ENCODE measurements at regions of chr12 and their contacts with region 1.

Region 1: DNA sequence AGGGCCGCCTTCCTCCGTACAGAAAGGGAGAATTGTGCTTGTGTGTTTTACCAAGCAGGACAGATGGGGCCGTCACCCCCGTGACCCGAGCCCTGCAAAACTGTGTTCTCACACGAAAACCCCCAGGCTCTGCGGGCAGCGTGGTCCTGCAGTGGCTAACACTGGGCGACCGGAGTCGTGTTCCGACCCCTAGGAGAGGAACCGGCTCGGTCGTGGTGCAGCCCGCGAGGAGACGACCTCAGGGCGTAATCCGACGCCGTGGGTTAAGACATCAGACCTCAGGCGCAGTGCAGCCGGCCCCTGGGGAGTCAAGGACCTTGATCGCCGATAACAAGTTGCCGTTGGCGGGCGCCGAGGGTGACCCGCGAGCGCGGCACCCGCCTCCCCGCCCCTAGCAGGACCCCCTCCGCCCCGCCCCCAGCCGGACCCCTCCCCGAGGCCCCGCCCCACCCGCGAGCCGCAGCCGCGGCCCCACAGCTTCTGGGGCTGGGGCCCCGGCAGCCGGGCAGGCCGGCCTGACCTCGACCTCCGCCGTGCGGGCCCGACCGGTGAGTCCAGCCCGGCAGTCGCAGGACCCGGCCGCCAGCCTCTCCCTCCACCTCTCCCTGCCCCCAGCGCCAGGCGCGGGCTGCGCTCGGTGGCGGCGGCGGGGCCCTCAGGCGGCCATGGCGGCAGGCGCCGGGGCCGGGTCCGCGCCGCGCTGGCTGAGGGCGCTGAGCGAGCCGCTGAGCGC is at the start of gene CHPT1:
- DNase-seq: peak; percentile 79 to 92 (median 90)
- ATAC-seq: peak; percentile 73 to 78 (median 76)
- H3K4me3 ChIP-seq: peak within 1 kb of the TSS; percentile 70 to 96 (median 90)
- H3K27ac ChIP-seq: peak within 1 kb of the TSS; percentile 86 to 98 (median 94)
- H3K4me1 ChIP-seq: peaks cover 0 to 47% (median 23%) of the 10 kb centered on the region in 12 donors
- H3K27me3 ChIP-seq: no peaks in the 10 kb centered on the region
- CTCF ChIP-seq: peak in 1 of 12 donors; percentile 4
- POLR2A ChIP-seq: peak; percentile 22 to 57
- total RNA-seq, gene CHPT1: 84.2 to 208 (median 98.9) TPM

Region 2: GRCh38 chr12:101680240-101680639 is 17.1 kb before region 1 on chr12:
- intact Hi-C with region 1: loop called in 2 of 10 experiments (anchors 2 kb)
- DNase-seq: peak in 1 of 5 donors; percentile 31
- ATAC-seq: peak; percentile 84 to 96 (median 90)
- H3K4me3 ChIP-seq: peak overlapping the region in 2 of 12 donors; percentile 14 to 24
- H3K27ac ChIP-seq: peak overlapping the region in 10 of 12 donors; percentile 4 to 81 (median 50)
- H3K4me1 ChIP-seq: peaks cover 0 to 10% (median 3%) of the 10 kb centered on the region in 12 donors
- H3K27me3 ChIP-seq: no peaks in the 10 kb centered on the region
- CTCF ChIP-seq: no peak
- POLR2A ChIP-seq: no peak

Region 3: DNA sequence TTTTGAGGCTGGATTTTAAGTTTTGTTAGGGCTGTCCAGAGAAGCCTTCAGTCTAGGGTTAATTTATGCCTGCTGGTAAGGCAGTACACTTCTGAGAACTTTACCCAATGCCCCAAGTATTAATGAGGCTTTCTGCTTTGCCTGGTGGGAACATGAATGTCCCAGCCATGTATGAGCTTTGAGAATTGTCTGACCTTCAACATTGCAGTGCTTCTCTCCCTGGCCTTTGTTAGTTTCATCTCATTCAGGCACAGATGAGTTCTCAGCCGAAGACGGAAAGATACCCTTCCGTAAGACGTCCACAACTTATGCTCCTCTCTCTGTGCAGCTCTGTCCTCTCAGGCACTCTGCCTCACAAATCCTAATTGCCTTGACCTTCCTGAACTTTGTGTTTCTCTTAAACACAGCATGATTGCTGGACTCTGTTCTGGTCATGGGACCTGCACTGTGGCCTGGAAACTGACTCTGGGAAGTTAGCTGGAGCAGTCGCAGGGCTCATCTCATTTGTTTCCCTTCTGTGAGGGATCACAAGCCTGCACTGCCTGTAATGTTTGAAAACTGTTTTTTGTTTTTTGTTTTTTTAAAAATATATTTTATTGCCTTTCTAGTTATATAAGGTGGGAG is 15.8 kb after region 1 on chr12:
- intact Hi-C with region 1: loop called in 1 of 10 experiments (anchors 1 kb)
- DNase-seq: peak in 4 of 5 donors; percentile 31 to 55 (median 40)
- ATAC-seq: peak; percentile 82 to 93 (median 87)
- H3K4me3 ChIP-seq: peak overlapping the region in 5 of 12 donors; percentile 6 to 38 (median 8)
- H3K27ac ChIP-seq: peak overlapping the region; percentile 30 to 74 (median 50)
- H3K4me1 ChIP-seq: peaks cover 0 to 42% (median 22%) of the 10 kb centered on the region in 12 donors
- H3K27me3 ChIP-seq: no peaks in the 10 kb centered on the region
- CTCF ChIP-seq: no peak
- POLR2A ChIP-seq: no peak

Measured in heart left ventricle (tissue), 16 donors.